ENCODE measurements at regions of chr1 and their contacts with region 1.

Region 1: GRCh38 chr1:184407816-184408537 is 21.1 kb downstream of the C1orf21 start:
- H3K4me3 ChIP-seq: no peak overlapping the region
- H3K27ac ChIP-seq: peak overlapping the region; percentile 33
- H3K4me1 ChIP-seq: peaks cover 33% of the 10 kb centered on the region
- CTCF ChIP-seq: no peak

Region 2: GRCh38 chr1:184386312-184387068 is 21.5 kb before region 1 on chr1 and contains the start of gene C1orf21:
- CTCF ChIA-PET with region 1: no interaction called
- POLR2A ChIA-PET with region 1: interaction called, 12 read pairs
- H3K4me3 ChIP-seq: peak within 1 kb of the TSS; percentile 88
- H3K27ac ChIP-seq: peak within 1 kb of the TSS; percentile 90
- H3K4me1 ChIP-seq: peaks cover 25% of the 10 kb centered on the region
- CTCF ChIP-seq: peak; percentile 69